Mammary epithelial cell (primary cell): ENCODE measurements at regions of chr15 and their contacts with region 1.

Region 1: DNA sequence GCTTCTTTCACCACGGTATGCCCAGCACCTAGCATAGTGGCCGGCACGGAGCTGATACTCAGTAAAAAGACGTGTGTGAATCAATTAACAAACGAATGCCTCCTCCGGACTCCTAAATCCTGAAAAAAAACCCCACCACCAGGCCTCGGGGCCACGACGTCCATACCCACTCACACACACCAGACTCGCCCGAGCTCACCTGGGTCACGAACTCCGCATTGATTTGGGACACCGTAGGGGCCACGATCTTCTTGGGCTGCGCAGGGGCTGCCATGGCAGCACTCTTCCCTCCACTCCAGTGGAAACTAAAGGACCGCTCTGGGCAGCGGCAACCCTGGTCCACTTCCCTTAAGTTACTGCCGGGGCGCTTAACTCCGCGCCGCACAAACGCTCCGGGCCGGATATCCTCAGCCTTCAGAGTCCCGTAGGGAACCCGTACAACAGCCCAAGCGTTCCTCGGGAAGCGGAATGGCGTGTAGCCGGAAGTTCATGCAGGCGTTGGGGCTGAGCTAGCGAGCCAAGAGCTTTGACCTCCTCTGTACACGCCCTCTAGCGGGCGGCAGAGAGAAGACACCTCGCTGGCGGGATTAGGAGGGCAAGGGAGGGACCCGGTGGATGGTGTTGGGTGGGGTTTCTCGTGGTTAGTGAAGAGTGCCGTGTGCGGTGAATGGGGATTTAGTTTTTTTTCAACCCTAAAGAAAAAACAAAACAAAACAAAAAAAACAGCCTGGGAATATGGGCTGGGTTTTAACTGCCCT is at the start of gene AQR:
- DNase-seq: peak; percentile 97
- H3K4me3 ChIP-seq: peak within 1 kb of the TSS; percentile 86 to 95 (median 87)
- H3K27ac ChIP-seq: peak within 1 kb of the TSS; percentile 71
- H3K4me1 ChIP-seq: peaks cover 4% of the 10 kb centered on the region
- H3K27me3 ChIP-seq: no peaks in the 10 kb centered on the region
- CTCF ChIP-seq: peak; percentile 58 to 82
- total RNA-seq, gene AQR: 24.8 to 30.0 TPM

Region 2: GRCh38 chr15:34812369-34812768 is 157.2 kb before region 1 on chr15:
- CTCF ChIA-PET with region 1: no interaction called
- dilution Hi-C with region 1: no loop called
- in situ Hi-C with region 1: no loop called
- intact Hi-C with region 1: no loop called
- DNase-seq: peak; percentile 44
- H3K4me3 ChIP-seq: no peak overlapping the region
- H3K27ac ChIP-seq: no peak overlapping the region
- H3K4me1 ChIP-seq: peaks cover 10% of the 10 kb centered on the region
- H3K27me3 ChIP-seq: no peaks in the 10 kb centered on the region
- CTCF ChIP-seq: no peak

Region 3: DNA sequence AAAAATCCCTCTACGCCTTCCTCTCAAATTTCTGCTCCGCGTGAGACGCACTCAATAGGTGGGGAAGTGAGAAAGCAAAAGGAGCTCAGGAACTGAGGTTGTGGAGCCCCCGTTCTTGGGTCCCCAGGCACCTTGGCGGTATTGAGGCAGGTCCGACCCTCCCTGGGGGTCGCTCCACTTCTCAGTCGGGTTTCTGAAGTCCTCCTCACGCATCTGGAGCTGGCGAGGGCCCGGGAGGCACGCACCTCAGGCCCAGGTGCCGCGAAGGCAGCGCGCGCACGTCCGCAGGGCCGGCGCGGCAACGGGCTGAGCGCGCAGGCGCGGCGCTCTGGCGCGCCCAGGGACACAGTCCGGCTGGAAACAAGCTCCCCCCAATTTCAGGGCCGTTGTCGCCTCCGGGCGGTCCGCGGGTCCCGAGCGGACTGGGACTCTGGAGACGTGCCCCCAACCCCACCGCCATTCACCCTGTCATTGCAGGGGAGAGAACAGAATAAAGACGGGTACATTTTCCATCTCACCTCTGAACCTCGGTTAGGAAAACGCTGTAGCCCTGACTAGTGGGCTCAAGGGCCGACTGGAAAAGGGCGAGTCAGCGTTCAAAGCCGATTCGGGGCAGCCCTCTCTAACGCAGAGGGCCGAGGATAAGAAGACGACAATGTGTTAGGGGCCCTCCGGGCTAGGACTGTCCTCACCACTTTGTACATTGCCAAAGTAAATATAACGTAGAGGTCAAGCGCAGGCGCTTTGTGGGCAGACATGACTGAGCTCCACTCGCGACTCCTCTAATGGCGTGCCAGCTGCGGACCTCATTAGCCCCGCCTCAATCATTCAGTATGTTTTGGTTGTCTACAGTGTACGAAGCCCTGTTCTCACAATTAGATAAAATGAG is 18.7 kb after region 1 on chr15 and contains the start of gene ZNF770:
- CTCF ChIA-PET with region 1: interaction called, 13 read pairs
- dilution Hi-C with region 1: no loop called
- in situ Hi-C with region 1: no loop called
- intact Hi-C with region 1: loop called (anchors 2 kb)
- DNase-seq: peak; percentile 75
- H3K4me3 ChIP-seq: peak within 1 kb of the TSS; percentile 82 to 94 (median 89)
- H3K27ac ChIP-seq: peak within 1 kb of the TSS; percentile 97
- H3K4me1 ChIP-seq: peaks cover 26% of the 10 kb centered on the region
- H3K27me3 ChIP-seq: no peaks in the 10 kb centered on the region
- CTCF ChIP-seq: no peak
- total RNA-seq, gene ZNF770: 41.7 to 45.3 TPM

Region 4: DNA sequence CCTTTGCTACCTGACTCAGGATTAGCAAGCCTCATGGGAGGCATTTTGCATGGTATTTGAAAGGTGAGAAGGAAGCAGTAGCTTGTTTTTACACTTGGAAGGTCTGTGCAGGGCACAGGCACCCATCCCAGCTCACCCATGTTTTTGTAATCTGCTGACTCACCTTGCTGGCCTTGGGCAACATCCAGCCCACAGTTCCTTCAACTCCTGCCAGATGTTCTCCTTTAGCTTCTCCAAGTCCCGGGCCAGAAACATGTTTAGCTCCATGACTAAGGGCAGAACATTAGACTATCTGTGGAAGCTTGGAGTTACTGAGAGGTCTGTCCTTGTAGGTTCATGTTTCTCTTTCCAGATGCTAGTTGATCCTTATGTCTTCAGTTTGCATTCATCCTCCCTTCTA is 31.0 kb after region 1 on chr15:
- CTCF ChIA-PET with region 1: interaction called, 17 read pairs
- dilution Hi-C with region 1: no loop called
- in situ Hi-C with region 1: no loop called
- intact Hi-C with region 1: no loop called
- DNase-seq: peak; percentile 98
- H3K4me3 ChIP-seq: no peak overlapping the region
- H3K27ac ChIP-seq: no peak overlapping the region
- H3K4me1 ChIP-seq: peaks cover 7% of the 10 kb centered on the region
- H3K27me3 ChIP-seq: no peaks in the 10 kb centered on the region
- CTCF ChIP-seq: no peak

Region 5: DNA sequence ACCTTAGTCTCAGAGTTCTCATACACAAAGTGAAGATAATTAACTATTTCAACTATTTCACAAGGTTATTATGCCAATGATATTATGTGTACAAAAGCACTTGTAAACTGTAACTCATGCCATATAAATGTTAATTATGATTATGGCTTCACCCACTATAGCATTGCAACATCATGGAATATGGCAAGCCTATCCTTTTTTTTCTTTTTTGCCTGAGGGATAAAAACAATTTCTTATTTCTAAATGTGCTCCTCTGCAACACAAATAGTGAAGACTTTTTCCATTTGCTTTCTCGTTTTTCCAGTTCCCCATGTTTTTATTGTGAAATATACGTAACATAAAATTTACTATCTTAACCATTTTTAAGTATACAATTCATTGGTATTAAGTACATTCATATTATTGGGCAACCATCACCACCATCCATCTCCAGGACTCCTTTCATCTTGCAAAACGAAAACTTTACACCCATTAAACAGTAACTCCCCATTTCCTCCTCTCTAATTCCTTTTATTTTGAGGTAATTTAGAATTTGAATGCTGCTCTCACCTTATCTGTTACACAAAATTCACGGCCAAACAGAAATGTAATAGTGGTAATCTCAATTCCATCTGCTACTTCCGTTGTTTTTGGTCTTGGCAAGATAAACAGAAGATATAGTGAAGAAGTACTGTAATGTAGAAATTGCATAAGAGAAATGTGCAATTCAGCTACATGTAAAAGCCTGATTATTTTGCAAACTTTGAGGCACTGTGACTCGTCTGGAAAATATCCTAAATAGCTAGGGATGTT is 69.3 kb after region 1 on chr15:
- CTCF ChIA-PET with region 1: no interaction called
- dilution Hi-C with region 1: no loop called
- in situ Hi-C with region 1: no loop called
- intact Hi-C with region 1: no loop called
- DNase-seq: peak; percentile 17
- H3K4me3 ChIP-seq: no peak overlapping the region
- H3K27ac ChIP-seq: no peak overlapping the region
- H3K4me1 ChIP-seq: no peaks in the 10 kb centered on the region
- H3K27me3 ChIP-seq: no peaks in the 10 kb centered on the region
- CTCF ChIP-seq: no peak